ENCODE measurements at regions of chr2 and their contacts with region 1.

Region 1: DNA sequence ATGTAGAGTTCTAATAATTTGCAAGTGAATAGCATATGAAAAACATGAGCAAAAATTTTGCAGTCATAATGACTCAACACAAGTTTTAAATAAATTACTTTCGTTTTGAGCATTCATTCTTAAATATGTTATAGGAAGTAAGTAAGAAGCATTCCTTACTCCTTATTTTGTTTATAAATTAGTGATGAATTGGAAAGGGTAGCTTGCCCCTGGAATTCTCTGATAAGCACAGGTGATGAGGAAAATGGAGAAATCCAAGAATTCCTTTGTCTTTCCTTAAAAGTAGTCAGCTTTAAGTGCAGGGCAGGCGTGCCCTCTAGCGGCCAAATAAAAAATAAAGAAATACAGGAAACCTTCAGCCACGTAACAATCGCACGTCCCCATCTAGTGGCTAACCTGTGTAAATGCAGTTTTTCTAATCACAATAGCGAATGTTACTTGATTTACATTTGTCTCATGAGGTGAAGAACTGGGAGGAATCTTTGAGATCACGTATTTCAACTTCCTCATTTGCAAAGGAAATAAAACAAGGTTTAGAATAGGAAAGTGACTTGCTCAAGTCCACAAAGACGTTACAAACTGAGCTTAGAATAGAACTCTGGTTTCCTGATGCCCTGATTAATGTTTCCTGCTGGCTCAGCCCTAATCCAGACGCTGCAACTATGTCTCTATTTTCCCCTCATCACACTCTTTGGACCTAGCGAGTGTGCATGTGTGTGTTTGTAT is 47.2 kb upstream of the ZNG1B start:
- DNase-seq: peak; percentile 72
- ATAC-seq: peak; percentile 83
- H3K4me3 ChIP-seq: no peak overlapping the region
- H3K27ac ChIP-seq: no peak overlapping the region
- H3K4me1 ChIP-seq: no peaks in the 10 kb centered on the region
- H3K27me3 ChIP-seq: no peaks in the 10 kb centered on the region
- CTCF ChIP-seq: peak; percentile 66 to 98 (median 85)
- POLR2A ChIP-seq: no peak
- RAD21 ChIP-seq: peak; percentile 76

Region 2: DNA sequence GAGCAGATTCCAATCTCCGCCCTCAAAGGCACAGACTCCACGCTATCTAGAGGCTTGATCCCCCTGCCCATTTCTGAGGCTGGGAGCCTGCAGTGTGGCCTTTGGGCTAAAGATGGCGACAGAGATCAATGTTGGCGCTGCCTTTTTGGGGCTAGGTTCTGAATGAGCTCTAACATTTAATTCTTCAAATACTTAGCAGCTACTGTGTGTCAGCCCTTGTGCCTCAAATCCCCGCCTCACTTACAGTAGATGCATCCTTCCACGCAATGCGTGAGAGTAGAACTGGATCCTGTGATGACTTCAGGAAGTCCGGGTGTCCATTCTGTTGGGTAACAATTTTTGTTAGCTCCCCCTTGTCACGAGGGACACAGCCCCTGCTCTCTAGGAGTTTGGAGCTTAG is 310.2 kb before region 1 on chr2:
- CTCF ChIA-PET with region 1: interaction called, 4 read pairs
- POLR2A ChIA-PET with region 1: no interaction called
- RAD21 ChIA-PET with region 1: no interaction called
- intact Hi-C with region 1: loop called (anchors 5 kb)
- DNase-seq: peak; percentile 13
- ATAC-seq: peak; percentile 86
- H3K4me3 ChIP-seq: no peak overlapping the region
- H3K27ac ChIP-seq: no peak overlapping the region
- H3K4me1 ChIP-seq: peaks cover 12 to 26% of the 10 kb centered on the region in 2 experiments
- H3K27me3 ChIP-seq: no peaks in the 10 kb centered on the region
- CTCF ChIP-seq: peak; percentile 79 to 91 (median 85)
- POLR2A ChIP-seq: no peak
- RAD21 ChIP-seq: peak; percentile 87